CD4-positive, alpha-beta memory T cell (primary cell): ENCODE measurements at regions of chr7 and their contacts with region 1.

Region 1: GRCh38 chr7:30740424-30741181 is 11.3 kb upstream of the INMT start:
- DNase-seq: peak; percentile 60 to 77 (median 67)
- H3K4me3 ChIP-seq: no peak overlapping the region
- H3K4me3 Mint-ChIP-seq: peak overlapping the region in 1 of 8 donors; percentile 50
- H3K27ac ChIP-seq: no peak overlapping the region
- H3K27ac Mint-ChIP-seq: peak overlapping the region in 5 of 7 donors; percentile 30 to 60 (median 53)
- H3K4me1 ChIP-seq: peaks cover 53% of the 10 kb centered on the region
- H3K4me1 Mint-ChIP-seq: peaks cover 31 to 50% (median 39%) of the 10 kb centered on the region in 4 donors
- H3K27me3 ChIP-seq: no peaks in the 10 kb centered on the region
- H3K27me3 Mint-ChIP-seq: no peaks in the 10 kb centered on the region

Region 2: GRCh38 chr7:30548762-30549344 is 191.8 kb before region 1 on chr7:
- CTCF ChIA-PET with region 1: interaction called, 41 read pairs
- POLR2A ChIA-PET with region 1: no interaction called
- intact Hi-C with region 1: loop called (anchors 1 kb)
- DNase-seq: peak in 3 of 5 donors; percentile 20 to 24 (median 21)
- H3K4me3 ChIP-seq: no peak overlapping the region
- H3K4me3 Mint-ChIP-seq: no peak overlapping the region
- H3K27ac ChIP-seq: no peak overlapping the region
- H3K27ac Mint-ChIP-seq: peak overlapping the region in 2 of 7 donors; percentile 16 to 61
- H3K4me1 ChIP-seq: no peaks in the 10 kb centered on the region
- H3K4me1 Mint-ChIP-seq: peaks cover 0 to 2% (median under 1%) of the 10 kb centered on the region in 4 donors
- H3K27me3 ChIP-seq: no peaks in the 10 kb centered on the region
- H3K27me3 Mint-ChIP-seq: no peaks in the 10 kb centered on the region

Region 3: DNA sequence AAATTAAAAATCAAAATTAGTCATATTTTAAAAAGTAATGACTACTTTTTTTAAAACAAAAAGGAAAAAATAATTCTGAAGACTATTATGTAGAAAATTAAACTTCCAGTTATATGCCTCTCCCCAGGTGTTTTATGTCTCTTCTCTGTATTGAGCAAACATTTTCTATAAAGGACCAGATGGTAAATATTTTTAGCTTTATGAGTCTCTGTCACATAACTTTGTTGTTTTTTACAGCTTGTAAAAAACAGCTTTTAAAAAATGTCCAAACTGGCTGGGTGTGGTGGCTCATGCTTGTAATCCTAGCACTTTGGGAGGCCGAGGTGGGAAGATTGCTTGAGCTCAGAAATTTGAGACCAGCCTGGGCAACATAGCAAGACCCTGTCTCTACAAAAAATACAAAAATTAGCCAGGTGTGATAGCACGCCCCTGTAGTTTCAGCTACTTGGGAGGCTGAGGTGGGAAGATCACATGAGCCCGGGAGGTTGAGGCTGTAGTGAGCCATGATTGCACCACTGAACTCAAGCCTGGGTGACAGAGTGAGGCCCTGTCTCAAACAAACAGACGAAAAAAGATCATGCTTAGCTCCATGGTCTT is 122.4 kb before region 1 on chr7:
- CTCF ChIA-PET with region 1: interaction called, 17 read pairs
- POLR2A ChIA-PET with region 1: no interaction called
- intact Hi-C with region 1: no loop called
- DNase-seq: no peak
- H3K4me3 ChIP-seq: no peak overlapping the region
- H3K4me3 Mint-ChIP-seq: no peak overlapping the region
- H3K27ac ChIP-seq: no peak overlapping the region
- H3K27ac Mint-ChIP-seq: no peak overlapping the region
- H3K4me1 ChIP-seq: no peaks in the 10 kb centered on the region
- H3K4me1 Mint-ChIP-seq: peaks cover 2 to 12% (median 3%) of the 10 kb centered on the region in 4 donors
- H3K27me3 ChIP-seq: no peaks in the 10 kb centered on the region
- H3K27me3 Mint-ChIP-seq: no peaks in the 10 kb centered on the region

Region 4: DNA sequence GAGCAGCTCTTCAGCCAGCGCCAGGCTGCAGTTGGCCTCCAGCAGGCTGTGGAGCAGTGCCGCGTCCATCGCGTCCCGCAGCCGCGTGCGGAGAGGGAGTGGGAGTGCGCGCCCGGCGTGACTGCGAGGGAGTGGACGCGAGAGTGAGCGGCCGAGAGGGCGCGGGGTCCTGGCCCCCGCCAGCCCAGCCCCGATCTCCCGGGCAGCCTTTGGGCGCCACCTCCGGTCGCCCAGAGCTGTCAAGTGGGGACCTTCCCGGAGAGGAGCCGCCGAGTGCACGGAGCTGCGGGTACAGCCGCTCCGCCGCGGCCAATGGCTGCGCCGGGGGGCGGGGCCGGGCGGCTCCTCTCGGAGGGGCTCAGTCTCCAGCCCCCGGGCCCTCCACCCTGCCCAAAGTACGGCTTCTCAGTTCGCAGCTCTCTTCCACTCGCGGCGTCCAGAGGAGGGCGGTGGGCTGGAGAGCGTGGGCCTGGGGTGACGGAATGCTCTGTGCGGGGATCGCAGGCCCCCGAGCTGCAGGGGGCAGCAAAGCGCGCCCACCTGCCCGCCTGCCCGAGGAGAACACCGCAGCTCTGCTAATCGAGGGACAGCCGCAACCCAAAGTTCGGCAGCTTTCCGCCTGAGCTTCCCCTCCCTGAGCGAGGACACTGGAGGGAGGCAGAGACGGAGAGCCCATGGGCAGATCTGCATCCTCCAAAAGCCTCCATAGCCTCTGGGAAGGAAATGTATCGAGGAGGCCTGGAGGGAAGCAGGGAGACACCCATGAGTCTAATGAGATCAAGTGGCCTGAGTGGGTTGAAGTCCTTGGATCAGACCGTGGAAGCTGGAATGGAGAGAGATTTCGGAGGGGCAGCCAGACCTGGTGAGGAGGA is 58.2 kb before region 1 on chr7 and contains the start of gene CRHR2:
- CTCF ChIA-PET with region 1: interaction called, 50 read pairs
- POLR2A ChIA-PET with region 1: interaction called, 9 read pairs
- intact Hi-C with region 1: loop called (anchors 1 kb)
- DNase-seq: peak in 4 of 5 donors; percentile 13 to 26 (median 19)
- H3K4me3 ChIP-seq: no peak within 1 kb of the TSS
- H3K4me3 Mint-ChIP-seq: peak within 1 kb of the TSS; percentile 67 to 88 (median 78)
- H3K27ac ChIP-seq: no peak within 1 kb of the TSS
- H3K27ac Mint-ChIP-seq: peak within 1 kb of the TSS in 2 of 7 donors; percentile 60 to 68
- H3K4me1 ChIP-seq: peaks cover 14% of the 10 kb centered on the region
- H3K4me1 Mint-ChIP-seq: peaks cover 4 to 29% (median 10%) of the 10 kb centered on the region in 4 donors
- H3K27me3 ChIP-seq: peaks cover 22% of the 10 kb centered on the region
- H3K27me3 Mint-ChIP-seq: peaks cover 34 to 57% of the 10 kb centered on the region in 2 donors
- total RNA-seq, gene CRHR2: not detected

Region 5: GRCh38 chr7:30717181-30717580 is 23.4 kb before region 1 on chr7:
- CTCF ChIA-PET with region 1: interaction called, 341 read pairs
- POLR2A ChIA-PET with region 1: interaction called, 7 read pairs
- intact Hi-C with region 1: no loop called
- DNase-seq: no peak
- H3K4me3 ChIP-seq: no peak overlapping the region
- H3K4me3 Mint-ChIP-seq: peak overlapping the region in 1 of 8 donors; percentile 52
- H3K27ac ChIP-seq: no peak overlapping the region
- H3K27ac Mint-ChIP-seq: no peak overlapping the region
- H3K4me1 ChIP-seq: no peaks in the 10 kb centered on the region
- H3K4me1 Mint-ChIP-seq: peaks cover 0 to 1% (median 0%) of the 10 kb centered on the region in 4 donors
- H3K27me3 ChIP-seq: no peaks in the 10 kb centered on the region
- H3K27me3 Mint-ChIP-seq: no peaks in the 10 kb centered on the region

Region 6: GRCh38 chr7:30727061-30727945 is 13.3 kb before region 1 on chr7:
- CTCF ChIA-PET with region 1: interaction called, 240 read pairs
- POLR2A ChIA-PET with region 1: interaction called, 139 read pairs
- intact Hi-C with region 1: loop called (anchors 1 kb)
- DNase-seq: peak; percentile 77 to 82 (median 81)
- H3K4me3 ChIP-seq: peak overlapping the region; percentile 47 to 70
- H3K4me3 Mint-ChIP-seq: peak overlapping the region; percentile 87 to 96 (median 92)
- H3K27ac ChIP-seq: peak overlapping the region; percentile 57
- H3K27ac Mint-ChIP-seq: peak overlapping the region; percentile 85 to 96 (median 94)
- H3K4me1 ChIP-seq: peaks cover 60% of the 10 kb centered on the region
- H3K4me1 Mint-ChIP-seq: peaks cover 38 to 66% (median 50%) of the 10 kb centered on the region in 4 donors
- H3K27me3 ChIP-seq: no peaks in the 10 kb centered on the region
- H3K27me3 Mint-ChIP-seq: no peaks in the 10 kb centered on the region

Region 7: GRCh38 chr7:30893357-30893756 is 152.8 kb after region 1 on chr7:
- CTCF ChIA-PET with region 1: no interaction called
- POLR2A ChIA-PET with region 1: no interaction called
- intact Hi-C with region 1: no loop called
- DNase-seq: no peak
- H3K4me3 ChIP-seq: no peak overlapping the region
- H3K4me3 Mint-ChIP-seq: no peak overlapping the region
- H3K27ac ChIP-seq: no peak overlapping the region
- H3K27ac Mint-ChIP-seq: no peak overlapping the region
- H3K4me1 ChIP-seq: no peaks in the 10 kb centered on the region
- H3K4me1 Mint-ChIP-seq: no peaks in the 10 kb centered on the region
- H3K27me3 ChIP-seq: no peaks in the 10 kb centered on the region
- H3K27me3 Mint-ChIP-seq: peaks cover 0 to 4% of the 10 kb centered on the region in 2 donors

Region 8: GRCh38 chr7:31002256-31002655 is 261.7 kb after region 1 on chr7:
- CTCF ChIA-PET with region 1: no interaction called
- POLR2A ChIA-PET with region 1: no interaction called
- intact Hi-C with region 1: no loop called
- DNase-seq: no peak
- H3K4me3 ChIP-seq: no peak overlapping the region
- H3K4me3 Mint-ChIP-seq: no peak overlapping the region
- H3K27ac ChIP-seq: no peak overlapping the region
- H3K27ac Mint-ChIP-seq: no peak overlapping the region
- H3K4me1 ChIP-seq: no peaks in the 10 kb centered on the region
- H3K4me1 Mint-ChIP-seq: peaks cover 0 to 1% (median 0%) of the 10 kb centered on the region in 4 donors
- H3K27me3 ChIP-seq: no peaks in the 10 kb centered on the region
- H3K27me3 Mint-ChIP-seq: no peaks in the 10 kb centered on the region